ENCODE measurements at regions of chr15 and their contacts with region 1.

Region 1: GRCh38 chr15:31128919-31129768 is 27.6 kb upstream of the TRPM1 start:
- DNase-seq: peak; percentile 83
- ATAC-seq: peak; percentile 89
- H3K4me3 Mint-ChIP-seq: no peak overlapping the region
- H3K27ac Mint-ChIP-seq: no peak overlapping the region
- H3K4me1 Mint-ChIP-seq: peaks cover 1% of the 10 kb centered on the region
- H3K27me3 Mint-ChIP-seq: peaks cover 13% of the 10 kb centered on the region

Region 2: GRCh38 chr15:30859091-30859874 is 269.9 kb before region 1 on chr15:
- CTCF ChIA-PET with region 1: interaction called, 17 read pairs
- DNase-seq: no peak
- ATAC-seq: peak; percentile 23
- H3K4me3 Mint-ChIP-seq: no peak overlapping the region
- H3K27ac Mint-ChIP-seq: no peak overlapping the region
- H3K4me1 Mint-ChIP-seq: no peaks in the 10 kb centered on the region
- H3K27me3 Mint-ChIP-seq: no peaks in the 10 kb centered on the region

Region 3: DNA sequence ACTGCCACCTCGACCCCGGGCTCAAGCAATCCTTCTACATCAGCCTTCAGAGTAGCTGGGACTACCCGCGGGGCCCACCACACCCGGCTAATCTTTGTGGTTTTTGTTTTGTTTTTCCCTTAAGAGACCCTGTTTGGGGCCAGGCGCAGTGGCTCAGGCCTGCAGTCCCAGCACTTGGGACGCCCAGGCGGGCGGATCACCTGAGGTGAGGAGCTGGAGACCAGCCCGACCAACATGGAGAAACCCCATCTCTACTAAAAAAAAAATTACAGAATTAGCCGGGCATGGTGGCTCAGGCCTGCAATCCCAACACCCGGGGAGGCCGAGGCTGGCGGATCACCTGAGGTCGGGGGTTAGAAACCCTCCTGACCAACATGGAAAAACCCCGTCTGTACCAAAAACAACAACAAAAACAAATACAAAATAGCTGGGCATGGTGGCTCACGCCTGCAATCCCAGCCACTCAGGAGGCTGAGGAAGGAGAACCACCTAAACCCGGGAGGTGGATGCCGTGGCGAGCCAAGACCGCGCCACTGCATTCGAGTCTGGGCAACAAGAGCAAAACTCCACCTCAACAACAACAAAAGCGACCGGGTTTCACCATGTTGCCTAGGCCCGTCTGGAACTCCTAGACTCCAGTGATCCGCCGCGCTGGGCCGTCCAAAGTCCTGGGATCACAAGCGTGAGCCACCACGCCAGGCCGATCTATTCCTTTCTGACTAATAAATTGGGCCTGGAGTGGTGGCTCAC is 233.5 kb before region 1 on chr15:
- CTCF ChIA-PET with region 1: interaction called, 31 read pairs
- DNase-seq: no peak
- ATAC-seq: no peak
- H3K4me3 Mint-ChIP-seq: no peak overlapping the region
- H3K27ac Mint-ChIP-seq: no peak overlapping the region
- H3K4me1 Mint-ChIP-seq: peaks cover 2% of the 10 kb centered on the region
- H3K27me3 Mint-ChIP-seq: peaks cover 4% of the 10 kb centered on the region

Region 4: GRCh38 chr15:30903497-30904201 is 225.5 kb before region 1 on chr15 and contains the start of gene FAN1:
- CTCF ChIA-PET with region 1: interaction called, 12 read pairs
- DNase-seq: peak; percentile 83
- ATAC-seq: peak; percentile 90
- H3K4me3 Mint-ChIP-seq: peak within 1 kb of the TSS; percentile 84
- H3K27ac Mint-ChIP-seq: peak within 1 kb of the TSS; percentile 65
- H3K4me1 Mint-ChIP-seq: peaks cover 18% of the 10 kb centered on the region
- H3K27me3 Mint-ChIP-seq: peaks cover 5% of the 10 kb centered on the region
- total RNA-seq, gene FAN1: 14.8 to 16.9 TPM

Measured in activated CD8-positive, alpha-beta memory T cell treated with anti-CD3 and anti-CD28 coated beads, Interleukin-2, amount 10 ng/mL, durations not matched to agents 7 days and 5 days (primary cell).